Activated T-helper 2 cell treated with anti-CD3 and anti-CD28 coated beads, Interferon-gamma antibody, Interleukin-2, Interleukin-4, amounts not matched to agents 10 μg/mL and 5 μg/mL and 100 μg/mL, durations not matched to agents 14 hours and 24 hours and 36 hours (primary cell): ENCODE measurements at regions of chr9 and their contacts with region 1.

Region 1: DNA sequence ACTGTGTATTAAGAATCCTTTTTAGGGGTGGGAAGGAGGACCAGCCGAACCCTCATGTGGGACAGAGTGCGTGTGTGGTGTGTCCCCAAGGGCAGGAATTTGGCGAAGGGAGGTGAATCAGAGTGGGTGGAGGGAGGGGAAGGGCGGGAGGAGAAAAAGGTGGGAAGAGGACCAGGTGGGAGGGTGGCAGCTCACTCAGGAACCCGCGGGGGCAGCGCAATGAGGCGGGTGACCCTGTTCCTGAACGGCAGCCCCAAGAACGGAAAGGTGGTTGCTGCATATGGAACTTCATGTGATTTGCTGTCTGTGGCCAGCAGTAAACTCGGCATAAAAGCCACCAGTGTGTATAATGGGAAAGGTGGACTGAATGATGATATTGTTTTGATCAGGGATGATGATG is 8.8 kb upstream of the POLR1E start:
- DNase-seq: no peak
- H3K4me3 Mint-ChIP-seq: no peak overlapping the region
- H3K27ac Mint-ChIP-seq: no peak overlapping the region
- H3K4me1 Mint-ChIP-seq: peaks cover 6% of the 10 kb centered on the region
- H3K27me3 Mint-ChIP-seq: peaks cover 35% of the 10 kb centered on the region

Region 2: GRCh38 chr9:37455884-37456647 is 20.9 kb before region 1 on chr9:
- intact Hi-C with region 1: loop called (anchors 1 kb)
- DNase-seq: no peak
- H3K4me3 Mint-ChIP-seq: no peak overlapping the region
- H3K27ac Mint-ChIP-seq: no peak overlapping the region
- H3K4me1 Mint-ChIP-seq: peaks cover 24% of the 10 kb centered on the region
- H3K27me3 Mint-ChIP-seq: no peaks in the 10 kb centered on the region

Region 3: GRCh38 chr9:37732086-37732741 is 255.3 kb after region 1 on chr9:
- intact Hi-C with region 1: no loop called
- DNase-seq: no peak
- H3K4me3 Mint-ChIP-seq: no peak overlapping the region
- H3K27ac Mint-ChIP-seq: no peak overlapping the region
- H3K4me1 Mint-ChIP-seq: no peaks in the 10 kb centered on the region
- H3K27me3 Mint-ChIP-seq: peaks cover 24% of the 10 kb centered on the region